ENCODE measurements at regions of chr21 and their contacts with region 1.

Region 1: GRCh38 chr21:33403779-33404585 is 769 bp downstream of the IFNGR2 start:
- DNase-seq: peak in 1 of 2 donors; percentile 34
- ATAC-seq: peak; percentile 48 to 59
- H3K4me3 ChIP-seq: peak overlapping the region; percentile 83 to 94 (median 88)
- H3K27ac ChIP-seq: peak overlapping the region; percentile 82 to 92 (median 87)
- H3K4me1 ChIP-seq: peaks cover 8 to 14% of the 10 kb centered on the region in 2 donors
- H3K27me3 ChIP-seq: no peaks in the 10 kb centered on the region
- CTCF ChIP-seq: no peak
- POLR2A ChIP-seq: no peak

Region 2: GRCh38 chr21:33441489-33442477 is 37.8 kb after region 1 on chr21:
- in situ Hi-C with region 1: no loop called
- intact Hi-C with region 1: loop called (anchors 5 kb)
- DNase-seq: peak in 1 of 2 donors; percentile 41
- ATAC-seq: peak in 1 of 2 donors; percentile 34
- H3K4me3 ChIP-seq: no peak overlapping the region
- H3K27ac ChIP-seq: peak overlapping the region in 2 of 4 donors; percentile 29 to 34
- H3K4me1 ChIP-seq: peaks cover 0 to 3% of the 10 kb centered on the region in 2 donors
- H3K27me3 ChIP-seq: no peaks in the 10 kb centered on the region
- CTCF ChIP-seq: no peak
- POLR2A ChIP-seq: no peak

Region 3: DNA sequence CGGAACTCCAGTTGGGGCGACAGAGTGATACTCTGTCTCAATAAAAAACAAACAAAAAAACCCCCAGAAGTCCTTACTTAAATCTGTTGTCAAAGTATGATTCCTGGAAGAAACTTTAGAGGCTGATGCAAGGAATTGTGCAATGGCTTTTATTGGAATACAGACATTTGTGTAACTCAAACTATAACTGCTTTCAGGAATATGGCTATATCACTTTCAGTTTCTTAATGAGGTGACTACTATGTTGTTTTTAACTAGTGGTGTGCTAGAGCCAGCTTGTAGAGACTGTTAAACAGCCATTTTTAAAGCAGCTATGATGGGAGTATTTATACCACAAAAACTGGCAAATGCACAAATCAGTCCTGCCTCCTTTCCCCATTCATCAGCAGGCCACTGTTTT is 110.2 kb after region 1 on chr21:
- in situ Hi-C with region 1: loop called in 1 of 4 experiments (anchors 25 kb)
- intact Hi-C with region 1: no loop called
- DNase-seq: no peak
- ATAC-seq: peak in 1 of 2 donors; percentile 30
- H3K4me3 ChIP-seq: no peak overlapping the region
- H3K27ac ChIP-seq: no peak overlapping the region
- H3K4me1 ChIP-seq: no peaks in the 10 kb centered on the region
- H3K27me3 ChIP-seq: no peaks in the 10 kb centered on the region
- CTCF ChIP-seq: no peak
- POLR2A ChIP-seq: no peak

Measured in gastrocnemius medialis (tissue), 4 donors.